ENCODE measurements at regions of chr10 and their contacts with region 1.

Region 1: DNA sequence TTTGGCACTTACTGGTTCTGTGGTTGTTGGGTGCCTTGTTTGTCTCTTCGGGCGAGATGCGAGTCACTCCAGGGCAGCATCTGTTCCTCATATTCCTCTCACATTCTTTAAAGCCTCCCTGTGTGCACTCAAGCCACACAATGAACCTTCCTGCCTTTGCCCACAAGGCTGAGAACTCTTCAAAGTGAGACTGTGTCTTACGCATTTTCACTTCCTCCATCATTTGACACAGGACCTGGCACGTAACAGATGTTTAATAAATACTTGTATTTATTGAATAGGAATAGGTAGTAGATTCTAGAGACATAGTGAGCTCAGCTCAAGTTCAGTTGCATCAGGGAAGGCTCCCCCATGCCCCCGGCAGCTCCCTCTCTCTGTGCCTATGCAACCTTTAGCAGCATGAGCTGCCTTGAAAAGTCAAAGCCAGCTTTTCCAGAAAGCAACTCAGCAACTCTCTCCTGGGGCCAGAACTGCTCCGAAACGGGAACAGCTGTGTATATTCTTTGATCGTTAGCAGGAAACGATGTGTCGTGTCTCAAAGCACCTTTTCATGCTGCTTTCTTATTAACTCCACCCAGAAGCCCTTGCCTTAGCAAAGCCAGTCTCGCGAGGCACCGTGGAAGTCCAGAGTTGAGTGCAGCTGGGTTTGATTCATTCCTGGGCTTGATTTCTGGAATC is 97.5 kb downstream of the PFKFB3 start:
- DNase-seq: peak; percentile 40
- H3K4me3 ChIP-seq: no peak overlapping the region
- H3K27ac ChIP-seq: no peak overlapping the region
- H3K4me1 ChIP-seq: peaks cover 43% of the 10 kb centered on the region
- H3K27me3 ChIP-seq: no peaks in the 10 kb centered on the region
- CTCF ChIP-seq: no peak

Region 2: GRCh38 chr10:5614155-5614721 is 686.0 kb before region 1 on chr10:
- CTCF ChIA-PET with region 1: no interaction called
- dilution Hi-C with region 1: no loop called
- in situ Hi-C with region 1: no loop called
- intact Hi-C with region 1: no loop called
- DNase-seq: no peak
- H3K4me3 ChIP-seq: no peak overlapping the region
- H3K27ac ChIP-seq: peak overlapping the region; percentile 46
- H3K4me1 ChIP-seq: peaks cover 71% of the 10 kb centered on the region
- H3K27me3 ChIP-seq: no peaks in the 10 kb centered on the region
- CTCF ChIP-seq: no peak

Region 3: DNA sequence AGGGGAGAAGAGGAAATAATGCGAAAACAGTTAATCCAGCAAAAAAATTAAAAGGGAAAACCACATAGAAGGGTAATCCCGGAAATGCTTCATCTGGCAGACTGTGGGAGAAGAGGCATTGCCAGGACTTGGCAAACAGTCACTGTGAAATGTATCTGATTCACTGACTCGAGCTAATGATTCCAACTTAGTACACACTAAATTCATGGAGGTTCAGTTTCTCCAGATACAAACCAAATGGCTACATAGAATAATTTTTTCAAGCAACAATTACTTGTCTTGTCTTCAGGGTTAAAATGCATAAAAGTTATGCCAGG is 523.4 kb before region 1 on chr10:
- CTCF ChIA-PET with region 1: no interaction called
- dilution Hi-C with region 1: no loop called
- in situ Hi-C with region 1: no loop called
- intact Hi-C with region 1: no loop called
- DNase-seq: peak; percentile 51
- H3K4me3 ChIP-seq: no peak overlapping the region
- H3K27ac ChIP-seq: no peak overlapping the region
- H3K4me1 ChIP-seq: no peaks in the 10 kb centered on the region
- H3K27me3 ChIP-seq: no peaks in the 10 kb centered on the region
- CTCF ChIP-seq: no peak

Region 4: GRCh38 chr10:6141296-6142151 is 158.7 kb before region 1 on chr10:
- CTCF ChIA-PET with region 1: no interaction called
- dilution Hi-C with region 1: no loop called
- in situ Hi-C with region 1: no loop called
- intact Hi-C with region 1: no loop called
- DNase-seq: peak; percentile 67
- H3K4me3 ChIP-seq: no peak overlapping the region
- H3K27ac ChIP-seq: no peak overlapping the region
- H3K4me1 ChIP-seq: peaks cover 15% of the 10 kb centered on the region
- H3K27me3 ChIP-seq: no peaks in the 10 kb centered on the region
- CTCF ChIP-seq: no peak

Region 5: GRCh38 chr10:6195846-6196245 is 104.4 kb before region 1 on chr10:
- CTCF ChIA-PET with region 1: no interaction called
- dilution Hi-C with region 1: loop called (anchors 5 kb)
- in situ Hi-C with region 1: no loop called
- intact Hi-C with region 1: no loop called
- DNase-seq: no peak
- H3K4me3 ChIP-seq: no peak overlapping the region
- H3K27ac ChIP-seq: no peak overlapping the region
- H3K4me1 ChIP-seq: peaks cover 3% of the 10 kb centered on the region
- H3K27me3 ChIP-seq: no peaks in the 10 kb centered on the region
- CTCF ChIP-seq: no peak

Region 6: GRCh38 chr10:6218692-6219493 is 81.4 kb before region 1 on chr10:
- CTCF ChIA-PET with region 1: no interaction called
- dilution Hi-C with region 1: no loop called
- in situ Hi-C with region 1: no loop called
- intact Hi-C with region 1: loop called (anchors 2 kb)
- DNase-seq: peak; percentile 100
- H3K4me3 ChIP-seq: no peak overlapping the region
- H3K27ac ChIP-seq: peak overlapping the region; percentile 84
- H3K4me1 ChIP-seq: peaks cover 36% of the 10 kb centered on the region
- H3K27me3 ChIP-seq: no peaks in the 10 kb centered on the region
- CTCF ChIP-seq: no peak

Region 7: DNA sequence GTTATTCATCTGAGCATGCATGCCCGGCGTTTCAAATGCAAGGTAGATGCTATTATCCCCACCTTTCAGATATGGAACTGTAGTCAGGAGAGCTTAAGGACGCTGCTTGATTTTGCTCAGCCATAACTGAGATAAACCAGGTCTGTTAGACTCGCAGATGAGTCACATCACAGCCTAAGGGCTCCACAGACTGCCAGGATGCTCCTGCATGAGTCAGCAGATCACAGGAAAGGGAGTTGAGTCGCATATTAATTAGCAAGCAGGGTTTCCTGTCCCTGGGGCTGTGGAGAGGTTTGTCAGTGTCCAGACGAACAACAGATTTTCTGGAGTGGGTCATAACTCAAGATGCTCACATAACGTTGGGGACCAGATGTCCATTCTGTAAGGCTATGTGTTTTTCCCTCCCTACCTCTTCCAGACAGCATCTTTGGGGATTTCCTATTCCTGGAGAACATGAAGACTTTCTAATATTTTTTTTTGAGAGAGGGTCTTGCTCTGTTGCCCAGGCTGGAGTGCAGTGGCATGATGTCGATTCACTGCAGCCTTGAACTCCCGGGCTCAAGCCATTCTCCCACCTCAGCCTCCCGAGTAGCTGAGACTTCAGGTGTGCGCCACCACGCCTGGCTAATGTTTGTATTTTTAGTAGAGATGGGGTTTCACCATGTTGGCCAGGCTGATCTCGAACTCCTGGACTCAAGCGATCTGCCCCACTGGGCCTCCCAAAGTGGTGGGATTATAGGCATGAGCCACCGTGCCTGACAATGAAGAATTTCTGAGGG is 60.8 kb before region 1 on chr10:
- CTCF ChIA-PET with region 1: no interaction called
- dilution Hi-C with region 1: loop called (anchors 5 kb)
- in situ Hi-C with region 1: no loop called
- intact Hi-C with region 1: no loop called
- DNase-seq: peak; percentile 98
- H3K4me3 ChIP-seq: no peak overlapping the region
- H3K27ac ChIP-seq: peak overlapping the region; percentile 24
- H3K4me1 ChIP-seq: peaks cover 20% of the 10 kb centered on the region
- H3K27me3 ChIP-seq: no peaks in the 10 kb centered on the region
- CTCF ChIP-seq: no peak

Region 8: DNA sequence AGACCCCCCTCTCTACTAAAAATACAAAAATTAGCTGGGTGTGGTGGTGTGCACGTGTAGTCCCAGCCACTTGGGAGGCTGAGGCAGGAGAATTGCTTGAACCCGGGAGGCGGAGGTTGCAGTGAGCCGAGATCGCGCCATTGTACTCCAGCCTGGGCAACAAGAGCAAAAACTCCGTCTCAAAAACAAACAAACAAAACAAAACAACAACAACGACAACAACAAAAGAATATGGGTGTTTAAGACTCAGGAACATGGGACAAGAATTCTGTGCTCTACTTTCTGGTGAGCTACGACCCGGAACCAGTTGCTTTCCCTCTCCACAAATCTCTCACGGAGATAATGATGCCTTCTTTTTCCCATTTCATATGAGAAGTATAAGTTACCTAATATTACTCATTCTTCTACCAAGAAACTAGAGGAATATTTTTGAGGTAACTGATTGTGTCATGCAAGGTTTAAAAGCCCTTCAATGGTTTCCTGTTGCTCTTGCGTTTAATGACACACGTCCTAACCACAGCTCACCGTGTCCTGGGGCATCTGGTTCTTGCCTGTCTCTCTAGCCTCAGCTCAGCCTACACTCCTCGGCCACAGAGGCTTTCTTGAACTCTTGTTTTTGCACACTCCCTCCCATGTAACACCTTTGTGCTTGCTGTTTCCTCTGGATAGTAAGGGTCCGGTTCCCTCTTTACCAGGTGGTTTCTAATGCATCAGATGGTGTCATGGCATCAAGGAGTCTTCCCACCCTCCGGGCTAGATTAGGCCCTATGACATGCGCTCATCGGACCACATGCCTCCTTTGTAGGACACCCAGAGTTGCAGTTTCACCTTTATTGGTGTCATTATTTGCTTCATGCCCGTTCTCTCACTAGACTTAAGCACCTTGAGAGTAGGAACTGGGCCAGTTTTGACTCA is 30.0 kb before region 1 on chr10:
- CTCF ChIA-PET with region 1: no interaction called
- dilution Hi-C with region 1: loop called (anchors 5 kb)
- in situ Hi-C with region 1: no loop called
- intact Hi-C with region 1: loop called (anchors 1 kb)
- DNase-seq: peak; percentile 90
- H3K4me3 ChIP-seq: no peak overlapping the region
- H3K27ac ChIP-seq: peak overlapping the region; percentile 6
- H3K4me1 ChIP-seq: peaks cover 21% of the 10 kb centered on the region
- H3K27me3 ChIP-seq: no peaks in the 10 kb centered on the region
- CTCF ChIP-seq: no peak

Region 9: GRCh38 chr10:6275022-6275997 is 24.9 kb before region 1 on chr10:
- CTCF ChIA-PET with region 1: no interaction called
- dilution Hi-C with region 1: no loop called
- in situ Hi-C with region 1: no loop called
- intact Hi-C with region 1: loop called (anchors 1 kb)
- DNase-seq: peak; percentile 99
- H3K4me3 ChIP-seq: peak overlapping the region in 1 of 3 experiments; percentile 34
- H3K27ac ChIP-seq: peak overlapping the region; percentile 84
- H3K4me1 ChIP-seq: peaks cover 27% of the 10 kb centered on the region
- H3K27me3 ChIP-seq: no peaks in the 10 kb centered on the region
- CTCF ChIP-seq: no peak